Ascending aorta (tissue), 2 donors: ENCODE measurements at regions of chrX and their contacts with region 1.

Region 1: GRCh38 chrX:123859846-123860838 is at the start of gene XIAP:
- DNase-seq: peak; percentile 31 to 91
- H3K4me3 ChIP-seq: peak within 1 kb of the TSS; percentile 60 to 76
- H3K27ac ChIP-seq: peak within 1 kb of the TSS; percentile 91 to 97
- H3K4me1 ChIP-seq: no peaks in the 10 kb centered on the region
- H3K27me3 ChIP-seq: no peaks in the 10 kb centered on the region
- CTCF ChIP-seq: no peak
- total RNA-seq, gene XIAP: 22.9 TPM

Region 2: DNA sequence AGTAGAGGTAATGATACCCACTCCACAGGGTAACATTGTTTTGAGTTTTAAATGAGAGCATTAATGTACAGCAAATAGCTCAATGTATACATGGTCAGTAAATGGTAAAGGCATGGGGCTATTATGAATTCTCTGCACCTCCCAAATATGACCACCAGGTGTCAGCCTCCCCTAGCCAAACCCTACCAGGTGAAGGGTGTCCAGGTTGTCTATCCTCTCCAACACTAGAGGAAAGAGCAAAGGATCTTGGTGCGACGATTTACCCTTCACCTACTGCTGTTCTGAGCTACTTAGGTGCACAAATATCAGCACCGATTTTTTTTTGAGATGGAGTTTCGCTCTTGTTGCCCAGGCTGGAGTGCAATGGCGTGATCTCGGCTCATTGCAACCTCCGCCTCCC is 26.8 kb before region 1 on chrX:
- intact Hi-C with region 1: loop called (anchors 2 kb)
- DNase-seq: peak in 1 of 2 donors; percentile 70
- H3K4me3 ChIP-seq: no peak overlapping the region
- H3K27ac ChIP-seq: no peak overlapping the region
- H3K4me1 ChIP-seq: peaks cover 0 to 3% of the 10 kb centered on the region in 2 donors
- H3K27me3 ChIP-seq: no peaks in the 10 kb centered on the region
- CTCF ChIP-seq: peak; percentile 42 to 71 (median 68)

Region 3: GRCh38 chrX:123976706-123977316 is 116.7 kb after region 1 on chrX:
- intact Hi-C with region 1: loop called (anchors 5 kb)
- DNase-seq: no peak
- H3K4me3 ChIP-seq: no peak overlapping the region
- H3K27ac ChIP-seq: no peak overlapping the region
- H3K4me1 ChIP-seq: peaks cover 0 to 21% of the 10 kb centered on the region in 2 donors
- H3K27me3 ChIP-seq: no peaks in the 10 kb centered on the region
- CTCF ChIP-seq: peak in 2 of 3 experiments; percentile 11 to 25